B cell (primary cell): ENCODE measurements at regions of chr1 and their contacts with region 1.

Region 1: DNA sequence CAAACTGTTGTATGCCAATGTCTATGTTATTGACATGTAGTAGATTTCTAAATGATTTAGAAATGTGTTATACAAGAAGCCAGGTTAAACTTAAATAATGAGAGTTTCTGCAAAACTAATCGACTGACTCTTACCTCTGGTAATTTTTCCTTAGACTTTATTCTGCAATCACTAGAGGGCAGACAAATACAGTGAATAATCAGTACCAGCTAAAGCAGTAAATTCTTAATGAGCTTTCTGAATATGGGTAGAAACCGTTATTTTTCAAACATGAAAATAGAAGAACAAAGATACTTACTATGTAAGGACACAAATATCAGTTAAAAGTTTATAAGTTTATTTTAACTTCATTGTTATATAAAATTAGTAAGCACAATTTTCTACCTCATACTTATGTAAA is 97.9 kb upstream of the RGS1 start:
- DNase-seq: peak; percentile 64
- ATAC-seq: peak; percentile 58
- H3K4me3 ChIP-seq: no peak overlapping the region
- H3K4me3 Mint-ChIP-seq: no peak overlapping the region
- H3K27ac ChIP-seq: no peak overlapping the region
- H3K27ac Mint-ChIP-seq: no peak overlapping the region
- H3K4me1 ChIP-seq: no peaks in the 10 kb centered on the region
- H3K4me1 Mint-ChIP-seq: no peaks in the 10 kb centered on the region
- H3K27me3 ChIP-seq: peaks cover 0 to 14% (median 10%) of the 10 kb centered on the region in 4 experiments
- H3K27me3 Mint-ChIP-seq: peaks cover 16% of the 10 kb centered on the region
- CTCF ChIP-seq: peak; percentile 77

Region 2: DNA sequence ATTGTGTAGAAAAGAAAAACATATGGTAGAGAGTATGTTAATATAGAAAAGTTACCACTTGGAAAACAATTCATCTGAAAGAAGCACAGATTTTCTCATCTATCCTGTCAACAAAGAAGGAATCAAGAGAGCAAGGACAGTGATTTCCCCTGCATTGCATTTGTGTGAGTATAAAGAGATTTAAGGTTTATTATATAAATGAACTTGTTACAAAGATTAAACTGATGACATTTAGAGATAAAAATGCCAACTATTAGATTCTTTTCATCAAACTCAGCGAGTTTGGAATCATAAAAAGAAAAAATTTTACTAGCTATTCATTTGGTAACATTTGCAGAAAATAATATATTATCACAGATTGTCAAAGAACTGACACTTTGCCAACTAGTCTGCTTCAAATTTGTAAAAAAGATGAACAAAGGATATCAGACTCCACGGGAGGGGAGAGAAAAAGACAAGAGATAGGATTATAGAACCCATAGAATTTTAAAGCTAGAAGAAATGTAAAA is 160.6 kb before region 1 on chr1 and contains the start of gene RGS21:
- CTCF ChIA-PET with region 1: no interaction called
- POLR2A ChIA-PET with region 1: no interaction called
- intact Hi-C with region 1: no loop called
- DNase-seq: no peak
- ATAC-seq: no peak
- H3K4me3 ChIP-seq: no peak within 1 kb of the TSS
- H3K4me3 Mint-ChIP-seq: no peak within 1 kb of the TSS
- H3K27ac ChIP-seq: no peak within 1 kb of the TSS
- H3K27ac Mint-ChIP-seq: no peak within 1 kb of the TSS
- H3K4me1 ChIP-seq: no peaks in the 10 kb centered on the region
- H3K4me1 Mint-ChIP-seq: no peaks in the 10 kb centered on the region
- H3K27me3 ChIP-seq: no peaks in the 10 kb centered on the region
- H3K27me3 Mint-ChIP-seq: no peaks in the 10 kb centered on the region
- CTCF ChIP-seq: no peak
- total RNA-seq, gene RGS21: not detected in 2 replicates

Region 3: DNA sequence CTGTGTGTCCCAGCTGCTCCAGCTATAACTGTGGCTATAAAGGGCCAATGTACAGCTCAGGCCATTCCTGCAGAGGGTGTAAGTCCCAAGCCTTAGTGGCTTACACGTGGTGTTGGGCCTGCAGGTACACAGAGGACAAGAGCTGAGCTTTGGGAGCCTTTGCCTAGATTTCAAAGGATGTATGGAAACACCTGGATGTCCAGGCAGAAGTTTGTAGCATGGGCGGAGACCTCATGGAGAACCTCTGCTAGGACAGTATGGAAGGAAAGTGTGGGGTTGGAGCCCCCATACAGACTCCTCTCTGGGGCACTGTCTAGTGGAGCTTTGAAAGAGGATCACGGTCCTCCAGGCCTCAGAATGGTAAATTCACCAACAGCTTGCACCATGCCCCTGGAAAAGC is 47.0 kb before region 1 on chr1:
- CTCF ChIA-PET with region 1: no interaction called
- POLR2A ChIA-PET with region 1: no interaction called
- intact Hi-C with region 1: no loop called
- DNase-seq: no peak
- ATAC-seq: no peak
- H3K4me3 ChIP-seq: no peak overlapping the region
- H3K4me3 Mint-ChIP-seq: no peak overlapping the region
- H3K27ac ChIP-seq: no peak overlapping the region
- H3K27ac Mint-ChIP-seq: no peak overlapping the region
- H3K4me1 ChIP-seq: no peaks in the 10 kb centered on the region
- H3K4me1 Mint-ChIP-seq: no peaks in the 10 kb centered on the region
- H3K27me3 ChIP-seq: no peaks in the 10 kb centered on the region
- H3K27me3 Mint-ChIP-seq: no peaks in the 10 kb centered on the region
- CTCF ChIP-seq: no peak

Region 4: GRCh38 chr1:192462616-192463015 is 15.0 kb before region 1 on chr1:
- CTCF ChIA-PET with region 1: interaction called, 13 read pairs
- POLR2A ChIA-PET with region 1: no interaction called
- intact Hi-C with region 1: no loop called
- DNase-seq: no peak
- ATAC-seq: no peak
- H3K4me3 ChIP-seq: no peak overlapping the region
- H3K4me3 Mint-ChIP-seq: no peak overlapping the region
- H3K27ac ChIP-seq: no peak overlapping the region
- H3K27ac Mint-ChIP-seq: no peak overlapping the region
- H3K4me1 ChIP-seq: no peaks in the 10 kb centered on the region
- H3K4me1 Mint-ChIP-seq: no peaks in the 10 kb centered on the region
- H3K27me3 ChIP-seq: peaks cover 0 to 13% (median 0%) of the 10 kb centered on the region in 4 experiments
- H3K27me3 Mint-ChIP-seq: peaks cover 46% of the 10 kb centered on the region
- CTCF ChIP-seq: no peak

Region 5: DNA sequence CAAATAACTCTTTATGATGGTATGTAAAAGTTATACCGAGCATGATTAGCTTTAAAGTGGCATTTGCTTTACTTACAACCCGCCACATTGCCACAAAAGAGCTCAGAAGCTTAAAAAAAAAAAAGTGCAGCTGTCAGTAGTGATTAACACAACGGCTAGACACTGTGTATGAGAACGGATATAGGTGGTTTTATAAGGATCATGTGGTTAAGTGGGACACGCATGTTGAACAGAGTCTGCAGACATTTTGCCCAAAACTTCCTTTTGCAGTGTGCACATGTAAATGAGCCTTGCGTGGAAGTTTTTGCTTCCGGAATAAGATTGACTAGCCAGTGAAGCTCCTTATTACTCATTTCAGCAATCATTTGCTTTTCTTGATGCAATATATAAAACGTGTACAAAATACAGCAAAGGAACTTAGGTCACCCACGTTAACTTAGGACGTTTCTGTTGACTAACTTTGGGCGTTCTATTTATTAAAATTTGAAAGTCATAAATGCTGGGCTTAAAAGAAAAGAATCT is 39.2 kb after region 1 on chr1:
- CTCF ChIA-PET with region 1: interaction called, 23 read pairs
- POLR2A ChIA-PET with region 1: no interaction called
- intact Hi-C with region 1: loop called (anchors 5 kb)
- DNase-seq: peak; percentile 92
- ATAC-seq: peak; percentile 96
- H3K4me3 ChIP-seq: peak overlapping the region in 2 of 5 experiments; percentile 7 to 44
- H3K4me3 Mint-ChIP-seq: peak overlapping the region; percentile 80
- H3K27ac ChIP-seq: peak overlapping the region in 1 of 2 donors; percentile 57
- H3K27ac Mint-ChIP-seq: peak overlapping the region; percentile 64
- H3K4me1 ChIP-seq: peaks cover 43 to 51% of the 10 kb centered on the region in 2 donors
- H3K4me1 Mint-ChIP-seq: peaks cover 52% of the 10 kb centered on the region
- H3K27me3 ChIP-seq: peaks cover 0 to 17% (median 7%) of the 10 kb centered on the region in 4 experiments
- H3K27me3 Mint-ChIP-seq: peaks cover 18% of the 10 kb centered on the region
- CTCF ChIP-seq: no peak

Region 6: GRCh38 chr1:192545896-192546521 is 68.4 kb after region 1 on chr1:
- CTCF ChIA-PET with region 1: interaction called, 8 read pairs
- POLR2A ChIA-PET with region 1: no interaction called
- intact Hi-C with region 1: loop called (anchors 2 kb)
- DNase-seq: peak; percentile 75
- ATAC-seq: peak; percentile 79
- H3K4me3 ChIP-seq: peak overlapping the region in 4 of 5 experiments; percentile 18 to 63 (median 34)
- H3K4me3 Mint-ChIP-seq: peak overlapping the region; percentile 85
- H3K27ac ChIP-seq: peak overlapping the region in 1 of 2 donors; percentile 39
- H3K27ac Mint-ChIP-seq: peak overlapping the region; percentile 81
- H3K4me1 ChIP-seq: peaks cover 12% of the 10 kb centered on the region in 2 donors
- H3K4me1 Mint-ChIP-seq: peaks cover 35% of the 10 kb centered on the region
- H3K27me3 ChIP-seq: peaks cover 0 to 4% (median 0%) of the 10 kb centered on the region in 4 experiments
- H3K27me3 Mint-ChIP-seq: peaks cover 11% of the 10 kb centered on the region
- CTCF ChIP-seq: peak; percentile 51

Region 7: GRCh38 chr1:192609110-192610079 is 131.8 kb after region 1 on chr1:
- CTCF ChIA-PET with region 1: interaction called, 148 read pairs
- POLR2A ChIA-PET with region 1: no interaction called
- intact Hi-C with region 1: loop called (anchors 1 kb)
- DNase-seq: peak; percentile 92
- ATAC-seq: peak; percentile 93
- H3K4me3 ChIP-seq: peak overlapping the region in 1 of 5 experiments; percentile 0
- H3K4me3 Mint-ChIP-seq: peak overlapping the region; percentile 47
- H3K27ac ChIP-seq: peak overlapping the region; percentile 22 to 66
- H3K27ac Mint-ChIP-seq: peak overlapping the region; percentile 87
- H3K4me1 ChIP-seq: peaks cover 24 to 31% of the 10 kb centered on the region in 2 donors
- H3K4me1 Mint-ChIP-seq: peaks cover 31% of the 10 kb centered on the region
- H3K27me3 ChIP-seq: peaks cover 2 to 17% (median 5%) of the 10 kb centered on the region in 4 experiments
- H3K27me3 Mint-ChIP-seq: peaks cover 11% of the 10 kb centered on the region
- CTCF ChIP-seq: no peak

Region 8: GRCh38 chr1:192700834-192701271 is 223.2 kb after region 1 on chr1:
- CTCF ChIA-PET with region 1: no interaction called
- POLR2A ChIA-PET with region 1: no interaction called
- intact Hi-C with region 1: no loop called
- DNase-seq: no peak
- ATAC-seq: no peak
- H3K4me3 ChIP-seq: no peak overlapping the region
- H3K4me3 Mint-ChIP-seq: no peak overlapping the region
- H3K27ac ChIP-seq: no peak overlapping the region
- H3K27ac Mint-ChIP-seq: no peak overlapping the region
- H3K4me1 ChIP-seq: no peaks in the 10 kb centered on the region
- H3K4me1 Mint-ChIP-seq: peaks cover 2% of the 10 kb centered on the region
- H3K27me3 ChIP-seq: no peaks in the 10 kb centered on the region
- H3K27me3 Mint-ChIP-seq: peaks cover 5% of the 10 kb centered on the region
- CTCF ChIP-seq: no peak

Region 9: DNA sequence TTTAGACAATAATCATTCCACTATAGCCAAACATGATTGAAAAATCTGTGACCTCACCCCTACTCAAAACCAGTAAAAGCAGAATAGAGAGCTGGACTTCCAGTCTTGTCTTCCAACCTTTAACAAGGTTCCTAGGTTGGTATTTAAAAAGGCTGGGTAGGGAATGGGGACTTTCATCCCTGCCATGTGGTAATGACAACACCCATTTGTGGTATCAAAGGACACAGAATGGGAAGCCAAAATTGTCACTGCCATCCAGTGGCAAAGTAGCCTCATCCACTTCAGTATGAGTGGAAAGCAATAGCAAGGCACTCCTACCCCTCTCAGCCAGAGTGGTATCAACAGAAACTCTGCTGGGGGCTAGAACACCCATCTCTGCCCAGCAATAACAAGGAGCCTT is 547.6 kb after region 1 on chr1:
- CTCF ChIA-PET with region 1: interaction called, 77 read pairs
- POLR2A ChIA-PET with region 1: no interaction called
- intact Hi-C with region 1: no loop called
- DNase-seq: no peak
- ATAC-seq: no peak
- H3K4me3 ChIP-seq: no peak overlapping the region
- H3K4me3 Mint-ChIP-seq: no peak overlapping the region
- H3K27ac ChIP-seq: no peak overlapping the region
- H3K27ac Mint-ChIP-seq: no peak overlapping the region
- H3K4me1 ChIP-seq: no peaks in the 10 kb centered on the region
- H3K4me1 Mint-ChIP-seq: no peaks in the 10 kb centered on the region
- H3K27me3 ChIP-seq: no peaks in the 10 kb centered on the region
- H3K27me3 Mint-ChIP-seq: no peaks in the 10 kb centered on the region
- CTCF ChIP-seq: no peak

Region 10: DNA sequence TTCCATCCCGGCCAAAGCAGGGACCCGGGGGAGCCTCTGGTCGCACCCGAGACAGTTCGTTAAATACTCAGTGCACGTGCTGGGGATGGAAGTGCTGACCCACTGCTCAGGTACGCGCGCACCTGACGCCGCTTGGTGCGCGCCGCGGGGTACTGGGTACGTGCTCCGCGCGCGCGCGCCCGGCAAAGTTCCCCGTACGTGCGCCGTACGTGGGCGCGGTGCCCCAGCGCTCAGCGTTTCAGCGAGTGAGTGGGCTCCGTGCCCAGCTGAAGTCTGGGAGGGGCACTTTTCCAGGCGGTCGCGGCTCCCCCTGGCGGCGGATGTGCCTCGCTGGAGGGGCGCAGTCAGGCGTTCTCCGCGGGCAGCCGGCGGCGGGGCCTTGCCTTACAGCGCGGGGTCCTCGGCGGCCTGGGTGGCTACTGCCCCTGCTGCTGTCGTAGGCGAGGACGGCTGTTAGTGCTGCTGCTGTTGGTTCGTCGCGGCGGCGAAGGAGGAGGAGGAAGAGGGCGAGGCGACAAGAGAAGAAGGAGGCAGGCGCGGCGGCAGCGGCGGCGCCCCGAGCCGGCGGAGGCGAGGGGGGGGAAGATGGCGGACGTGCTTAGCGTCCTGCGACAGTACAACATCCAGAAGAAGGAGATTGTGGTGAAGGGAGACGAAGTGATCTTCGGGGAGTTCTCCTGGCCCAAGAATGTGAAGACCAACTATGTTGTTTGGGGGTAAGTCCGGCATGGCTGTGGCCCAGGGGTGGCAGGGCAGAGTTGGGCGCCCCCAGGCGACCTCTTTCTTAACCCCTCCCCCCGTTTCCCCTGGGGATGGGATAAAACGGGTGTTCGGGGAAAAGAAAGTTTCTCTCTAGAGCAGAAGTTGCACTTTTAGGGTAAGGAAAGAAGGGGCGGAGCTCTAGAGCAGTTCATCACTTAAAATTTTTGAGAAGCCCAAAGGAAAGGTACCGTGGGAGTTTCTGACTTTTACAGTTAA is 644.3 kb after region 1 on chr1 and contains the start of gene CDC73:
- CTCF ChIA-PET with region 1: interaction called, 21 read pairs
- POLR2A ChIA-PET with region 1: no interaction called
- intact Hi-C with region 1: loop called (anchors 2 kb)
- DNase-seq: peak; percentile 99
- ATAC-seq: peak; percentile 89
- H3K4me3 ChIP-seq: peak within 1 kb of the TSS; percentile 87 to 99 (median 93)
- H3K4me3 Mint-ChIP-seq: peak within 1 kb of the TSS; percentile 90
- H3K27ac ChIP-seq: peak within 1 kb of the TSS; percentile 82 to 93
- H3K27ac Mint-ChIP-seq: peak within 1 kb of the TSS; percentile 93
- H3K4me1 ChIP-seq: peaks cover 20 to 21% of the 10 kb centered on the region in 2 donors
- H3K4me1 Mint-ChIP-seq: peaks cover 40% of the 10 kb centered on the region
- H3K27me3 ChIP-seq: no peaks in the 10 kb centered on the region
- H3K27me3 Mint-ChIP-seq: no peaks in the 10 kb centered on the region
- CTCF ChIP-seq: peak; percentile 92
- total RNA-seq, gene CDC73: 71.7 and 77.2 TPM in 2 replicates